ENCODE measurements at regions of chr2 and their contacts with region 1.

Region 1: DNA sequence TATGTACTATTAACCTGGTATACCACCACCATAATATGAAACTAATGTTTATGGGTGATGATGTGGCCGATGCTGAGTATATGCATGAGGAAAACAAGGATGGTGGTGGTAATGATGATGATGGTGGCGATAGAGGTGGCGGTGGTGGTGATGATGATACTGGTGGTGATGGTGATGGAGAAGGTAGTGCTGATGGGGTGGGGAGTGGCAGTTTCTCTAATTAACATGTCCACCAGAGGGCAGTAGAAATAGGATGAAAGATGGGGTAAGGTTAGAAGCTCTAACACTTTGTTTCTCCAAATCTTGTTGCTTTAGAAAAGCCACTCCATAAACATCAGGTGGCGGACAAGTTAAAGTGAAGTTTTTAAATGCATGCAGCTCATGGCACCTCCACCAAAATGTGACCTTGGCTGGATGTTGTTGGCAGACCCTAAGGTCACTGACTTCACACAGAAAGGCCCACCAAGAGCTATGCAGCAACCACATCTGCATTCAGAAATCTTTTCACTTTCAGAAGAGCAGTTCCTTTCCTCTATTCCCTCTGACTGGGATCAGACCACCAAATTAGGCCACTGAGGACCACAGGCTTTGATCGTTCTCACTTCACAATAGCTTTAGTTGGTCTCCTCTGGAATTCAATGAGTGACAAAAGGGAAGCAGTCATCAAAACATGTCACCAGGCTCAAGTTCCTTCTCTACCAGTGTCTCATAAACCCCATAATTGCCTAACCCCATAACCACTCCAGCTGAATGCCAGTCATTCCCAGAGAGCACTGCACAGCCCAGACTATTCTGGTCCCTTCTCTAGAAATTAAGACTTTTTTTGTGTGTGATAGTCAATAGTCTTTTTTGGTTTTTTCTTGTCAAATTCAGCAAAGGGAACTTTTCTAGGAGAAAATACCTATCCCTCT is 7.5 kb upstream of the BCL11A start:
- DNase-seq: peak; percentile 75
- ATAC-seq: peak; percentile 53
- H3K4me3 ChIP-seq: no peak overlapping the region
- H3K4me3 Mint-ChIP-seq: no peak overlapping the region
- H3K27ac ChIP-seq: no peak overlapping the region
- H3K27ac Mint-ChIP-seq: peak overlapping the region; percentile 70
- H3K4me1 ChIP-seq: peaks cover 18% of the 10 kb centered on the region in 2 donors
- H3K4me1 Mint-ChIP-seq: peaks cover 37% of the 10 kb centered on the region
- H3K27me3 ChIP-seq: no peaks in the 10 kb centered on the region
- H3K27me3 Mint-ChIP-seq: no peaks in the 10 kb centered on the region
- CTCF ChIP-seq: peak; percentile 63

Region 2: GRCh38 chr2:58762176-58762781 is 1798.7 kb before region 1 on chr2:
- CTCF ChIA-PET with region 1: interaction called, 24 read pairs
- POLR2A ChIA-PET with region 1: no interaction called
- intact Hi-C with region 1: no loop called
- DNase-seq: peak; percentile 65
- ATAC-seq: peak; percentile 74
- H3K4me3 ChIP-seq: no peak overlapping the region
- H3K4me3 Mint-ChIP-seq: no peak overlapping the region
- H3K27ac ChIP-seq: no peak overlapping the region
- H3K27ac Mint-ChIP-seq: no peak overlapping the region
- H3K4me1 ChIP-seq: peaks cover 7 to 8% of the 10 kb centered on the region in 2 donors
- H3K4me1 Mint-ChIP-seq: peaks cover 8% of the 10 kb centered on the region
- H3K27me3 ChIP-seq: no peaks in the 10 kb centered on the region
- H3K27me3 Mint-ChIP-seq: peaks cover 4% of the 10 kb centered on the region
- CTCF ChIP-seq: peak; percentile 82

Region 3: GRCh38 chr2:59449269-59449668 is 1111.7 kb before region 1 on chr2:
- CTCF ChIA-PET with region 1: interaction called, 40 read pairs
- POLR2A ChIA-PET with region 1: no interaction called
- intact Hi-C with region 1: loop called (anchors 1 kb)
- DNase-seq: peak; percentile 65
- ATAC-seq: peak; percentile 78
- H3K4me3 ChIP-seq: no peak overlapping the region
- H3K4me3 Mint-ChIP-seq: no peak overlapping the region
- H3K27ac ChIP-seq: no peak overlapping the region
- H3K27ac Mint-ChIP-seq: no peak overlapping the region
- H3K4me1 ChIP-seq: no peaks in the 10 kb centered on the region
- H3K4me1 Mint-ChIP-seq: no peaks in the 10 kb centered on the region
- H3K27me3 ChIP-seq: no peaks in the 10 kb centered on the region
- H3K27me3 Mint-ChIP-seq: peaks cover 4% of the 10 kb centered on the region
- CTCF ChIP-seq: no peak

Region 4: GRCh38 chr2:59789505-59789904 is 771.5 kb before region 1 on chr2:
- CTCF ChIA-PET with region 1: no interaction called
- POLR2A ChIA-PET with region 1: no interaction called
- intact Hi-C with region 1: loop called (anchors 1 kb)
- DNase-seq: no peak
- ATAC-seq: no peak
- H3K4me3 ChIP-seq: no peak overlapping the region
- H3K4me3 Mint-ChIP-seq: no peak overlapping the region
- H3K27ac ChIP-seq: no peak overlapping the region
- H3K27ac Mint-ChIP-seq: no peak overlapping the region
- H3K4me1 ChIP-seq: no peaks in the 10 kb centered on the region
- H3K4me1 Mint-ChIP-seq: no peaks in the 10 kb centered on the region
- H3K27me3 ChIP-seq: no peaks in the 10 kb centered on the region
- H3K27me3 Mint-ChIP-seq: no peaks in the 10 kb centered on the region
- CTCF ChIP-seq: no peak

Region 5: GRCh38 chr2:59947917-59948541 is 613.0 kb before region 1 on chr2:
- CTCF ChIA-PET with region 1: no interaction called
- POLR2A ChIA-PET with region 1: no interaction called
- intact Hi-C with region 1: no loop called
- DNase-seq: no peak
- ATAC-seq: no peak
- H3K4me3 ChIP-seq: no peak overlapping the region
- H3K4me3 Mint-ChIP-seq: no peak overlapping the region
- H3K27ac ChIP-seq: no peak overlapping the region
- H3K27ac Mint-ChIP-seq: no peak overlapping the region
- H3K4me1 ChIP-seq: no peaks in the 10 kb centered on the region
- H3K4me1 Mint-ChIP-seq: no peaks in the 10 kb centered on the region
- H3K27me3 ChIP-seq: no peaks in the 10 kb centered on the region
- H3K27me3 Mint-ChIP-seq: peaks cover 5% of the 10 kb centered on the region
- CTCF ChIP-seq: no peak

Region 6: DNA sequence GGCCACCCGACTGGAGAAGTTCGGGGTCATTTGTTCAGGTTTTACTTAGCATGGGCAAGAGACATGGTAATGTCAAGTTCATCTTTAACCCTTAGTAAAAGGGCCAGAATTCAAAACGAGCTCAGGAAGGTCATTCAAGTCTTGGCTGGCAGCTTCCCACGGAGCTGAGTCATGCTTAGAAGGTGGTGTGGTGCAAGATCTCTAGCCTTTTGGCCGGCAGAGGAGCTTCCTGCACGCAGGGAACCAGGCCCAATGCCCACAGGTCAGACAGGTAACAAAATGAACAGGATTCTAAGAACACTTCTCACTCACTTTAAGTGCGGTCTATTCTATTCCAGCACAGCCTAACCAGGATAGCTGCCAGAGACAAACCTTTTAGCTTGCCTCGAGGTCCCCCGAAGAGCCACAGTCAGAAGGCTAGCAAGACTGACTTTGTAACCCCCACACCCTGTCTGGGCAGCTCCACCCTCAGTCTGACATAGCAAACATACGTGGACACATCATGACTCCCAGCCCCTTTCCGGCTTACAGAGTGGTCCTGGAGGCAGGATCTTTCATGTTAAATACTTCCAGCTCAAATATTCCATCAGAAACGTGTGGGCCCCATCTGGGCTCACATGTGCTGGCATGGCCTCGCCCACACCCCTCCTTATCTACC is 300.2 kb before region 1 on chr2:
- CTCF ChIA-PET with region 1: no interaction called
- POLR2A ChIA-PET with region 1: no interaction called
- intact Hi-C with region 1: no loop called
- DNase-seq: no peak
- ATAC-seq: no peak
- H3K4me3 ChIP-seq: no peak overlapping the region
- H3K4me3 Mint-ChIP-seq: no peak overlapping the region
- H3K27ac ChIP-seq: no peak overlapping the region
- H3K27ac Mint-ChIP-seq: no peak overlapping the region
- H3K4me1 ChIP-seq: no peaks in the 10 kb centered on the region
- H3K4me1 Mint-ChIP-seq: peaks cover 7% of the 10 kb centered on the region
- H3K27me3 ChIP-seq: no peaks in the 10 kb centered on the region
- H3K27me3 Mint-ChIP-seq: no peaks in the 10 kb centered on the region
- CTCF ChIP-seq: no peak

Measured in B cell (primary cell).